ENCODE measurements at regions of chr7 and their contacts with region 1.

Region 1: DNA sequence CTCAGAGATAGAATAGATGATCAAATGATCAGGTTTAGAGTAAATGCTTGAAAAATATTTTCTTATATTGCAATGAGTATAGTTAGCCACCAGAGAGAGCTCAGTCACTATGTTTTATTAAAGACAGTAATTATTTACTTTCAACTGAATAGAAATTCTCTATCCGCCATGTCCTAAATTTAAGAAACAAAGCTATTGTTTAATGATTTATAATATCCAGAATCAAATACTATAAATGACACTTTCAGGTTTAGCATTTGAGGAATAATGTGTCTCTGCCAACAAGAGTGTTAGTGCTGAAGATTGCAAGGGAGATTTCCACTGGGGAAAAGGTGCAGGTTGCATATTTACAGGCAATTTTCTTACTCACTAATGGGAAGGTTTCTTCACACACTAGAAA is 184.7 kb downstream of the DGKB start:
- DNase-seq: peak; percentile 17
- H3K4me3 Mint-ChIP-seq: no peak overlapping the region
- H3K27ac Mint-ChIP-seq: no peak overlapping the region
- H3K4me1 Mint-ChIP-seq: no peaks in the 10 kb centered on the region
- H3K27me3 Mint-ChIP-seq: peaks cover 63% of the 10 kb centered on the region
- CTCF ChIP-seq: peak; percentile 59

Region 2: DNA sequence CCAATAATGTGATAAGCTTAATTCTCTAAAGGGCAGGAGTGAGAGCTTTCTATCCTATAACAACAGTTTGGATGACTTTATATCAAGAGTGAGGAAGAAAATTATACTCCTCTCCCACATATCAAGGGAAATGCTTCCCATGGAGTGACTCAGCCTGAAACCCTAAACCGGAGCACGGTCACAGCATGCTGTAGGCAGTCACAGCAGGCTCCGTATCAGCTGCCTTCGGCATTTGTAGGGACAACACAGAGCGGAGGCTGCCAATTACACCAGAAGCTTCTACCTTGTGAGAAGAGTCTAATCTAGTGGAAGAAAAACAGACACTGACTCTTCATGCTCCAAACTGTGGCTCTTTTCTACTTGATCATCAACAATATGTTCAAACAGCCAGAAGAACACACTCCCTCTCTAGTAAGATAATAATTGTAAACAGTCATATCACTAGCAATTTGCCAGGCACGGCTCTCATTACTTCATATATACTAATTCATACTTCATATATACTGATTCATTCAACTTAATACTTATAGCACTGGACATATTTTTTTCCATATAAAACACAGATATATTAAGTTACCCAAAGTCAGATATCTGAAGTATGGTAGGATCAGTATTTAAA is 118.9 kb after region 1 on chr7:
- CTCF ChIA-PET with region 1: no interaction called
- POLR2A ChIA-PET with region 1: no interaction called
- intact Hi-C with region 1: no loop called
- DNase-seq: peak; percentile 44
- H3K4me3 Mint-ChIP-seq: no peak overlapping the region
- H3K27ac Mint-ChIP-seq: no peak overlapping the region
- H3K4me1 Mint-ChIP-seq: peaks cover 5% of the 10 kb centered on the region
- H3K27me3 Mint-ChIP-seq: peaks cover 63% of the 10 kb centered on the region
- CTCF ChIP-seq: no peak

Region 3: GRCh38 chr7:14924398-14924797 is 206.6 kb after region 1 on chr7:
- CTCF ChIA-PET with region 1: interaction called, 3 read pairs
- POLR2A ChIA-PET with region 1: interaction called, 5 read pairs
- intact Hi-C with region 1: loop called (anchors 2 kb)
- DNase-seq: no peak
- H3K4me3 Mint-ChIP-seq: no peak overlapping the region
- H3K27ac Mint-ChIP-seq: no peak overlapping the region
- H3K4me1 Mint-ChIP-seq: no peaks in the 10 kb centered on the region
- H3K27me3 Mint-ChIP-seq: peaks cover 79% of the 10 kb centered on the region
- CTCF ChIP-seq: peak; percentile 6

Region 4: GRCh38 chr7:15015545-15016326 is 297.9 kb after region 1 on chr7:
- CTCF ChIA-PET with region 1: interaction called, 15 read pairs
- POLR2A ChIA-PET with region 1: interaction called, 6 read pairs
- intact Hi-C with region 1: loop called (anchors 1 kb)
- DNase-seq: peak; percentile 86
- H3K4me3 Mint-ChIP-seq: peak overlapping the region; percentile 43
- H3K27ac Mint-ChIP-seq: no peak overlapping the region
- H3K4me1 Mint-ChIP-seq: no peaks in the 10 kb centered on the region
- H3K27me3 Mint-ChIP-seq: peaks cover 57% of the 10 kb centered on the region
- CTCF ChIP-seq: peak; percentile 55

Region 5: DNA sequence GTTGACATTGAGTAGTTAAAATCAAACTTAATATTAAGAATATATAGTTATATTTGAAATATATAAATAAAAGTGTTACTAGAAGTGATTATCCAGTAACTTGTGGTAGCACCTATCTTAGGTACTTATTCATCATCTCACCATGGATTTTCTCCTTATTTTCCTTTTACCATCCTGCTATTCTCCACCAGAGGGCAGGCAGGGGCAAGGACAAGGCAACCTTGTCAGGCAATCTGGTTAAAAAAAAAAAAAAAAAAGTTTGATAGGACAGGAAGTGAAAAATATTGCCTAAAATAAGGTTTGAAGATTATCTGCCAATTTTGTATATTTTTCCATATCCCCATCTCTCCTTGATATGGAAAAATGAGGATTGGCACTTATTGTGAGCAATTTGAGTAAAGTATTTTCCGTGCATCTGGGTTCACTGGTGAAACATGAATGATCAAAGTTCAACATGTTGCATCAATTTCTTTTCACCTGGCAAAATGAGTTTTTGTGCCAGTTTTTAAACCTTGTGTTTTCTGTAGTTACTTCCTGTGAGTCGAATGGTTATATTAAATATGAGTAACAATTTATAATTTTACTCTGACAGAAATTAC is 587.3 kb after region 1 on chr7:
- CTCF ChIA-PET with region 1: no interaction called
- POLR2A ChIA-PET with region 1: no interaction called
- intact Hi-C with region 1: loop called (anchors 5 kb)
- DNase-seq: peak; percentile 71
- H3K4me3 Mint-ChIP-seq: no peak overlapping the region
- H3K27ac Mint-ChIP-seq: no peak overlapping the region
- H3K4me1 Mint-ChIP-seq: no peaks in the 10 kb centered on the region
- H3K27me3 Mint-ChIP-seq: peaks cover 23% of the 10 kb centered on the region
- CTCF ChIP-seq: peak; percentile 63